HepG2 (cell line): ENCODE measurements at regions of chr13 and their contacts with region 1.

Region 1: GRCh38 chr13:51286135-51287002 is 53.1 kb upstream of the SERPINE3 start:
- DNase-seq: peak; percentile 39
- ATAC-seq: peak; percentile 92
- H3K4me3 ChIP-seq: no peak overlapping the region
- H3K27ac ChIP-seq: no peak overlapping the region
- H3K4me1 ChIP-seq: peaks cover 9% of the 10 kb centered on the region
- H3K27me3 ChIP-seq: peaks cover 0 to 19% of the 10 kb centered on the region in 2 experiments; a peak in 2 of 5 replicates
- CTCF ChIP-seq: peak; percentile 88
- EP300 ChIP-seq: no peak
- POLR2A ChIP-seq: no peak
- RAD21 ChIP-seq: peak; percentile 71

Region 2: DNA sequence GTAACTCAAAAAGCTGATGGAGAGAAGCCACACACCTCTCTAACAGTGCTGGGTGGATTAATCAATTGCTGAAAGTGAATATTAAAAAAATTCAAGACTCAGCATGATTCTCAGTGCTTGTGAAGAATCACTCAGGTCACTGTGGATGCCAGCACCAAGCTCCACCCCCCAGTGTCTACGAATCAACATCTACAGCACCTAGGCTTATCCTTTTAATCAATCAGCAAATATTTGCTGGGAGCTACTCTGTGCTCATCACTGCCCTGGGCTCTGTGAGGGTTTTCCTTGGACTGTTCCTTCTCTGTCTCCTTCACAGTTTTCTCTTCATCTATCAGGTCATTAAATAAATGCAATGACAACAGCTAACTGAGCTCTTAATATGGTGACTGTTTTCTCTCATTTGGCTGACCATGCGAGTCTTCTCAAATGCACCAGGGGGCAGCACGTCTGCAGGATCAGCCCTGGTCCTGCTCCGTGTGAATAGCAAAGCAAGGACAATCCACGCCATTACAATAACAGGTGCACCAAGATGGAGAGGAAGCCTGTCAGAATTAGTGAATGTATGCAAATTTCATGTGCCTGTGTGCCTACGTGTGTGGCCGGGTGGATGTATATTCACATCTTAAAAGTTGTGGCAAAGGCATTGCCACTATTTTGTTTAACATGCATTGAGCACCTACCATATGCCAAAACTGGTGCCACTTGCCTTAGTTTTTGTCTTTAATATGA is 160.7 kb before region 1 on chr13:
- CTCF ChIA-PET with region 1: interaction called, 23 read pairs
- POLR2A ChIA-PET with region 1: no interaction called
- in situ Hi-C with region 1: loop called (anchors 5 kb)
- intact Hi-C with region 1: loop called (anchors 1 kb)
- DNase-seq: peak; percentile 63
- ATAC-seq: peak; percentile 86
- H3K4me3 ChIP-seq: no peak overlapping the region
- H3K27ac ChIP-seq: no peak overlapping the region
- H3K4me1 ChIP-seq: peaks cover 29% of the 10 kb centered on the region
- H3K27me3 ChIP-seq: peaks cover 0 to 34% of the 10 kb centered on the region in 2 experiments; a peak in 4 of 5 replicates
- CTCF ChIP-seq: peak; percentile 86
- EP300 ChIP-seq: no peak
- POLR2A ChIP-seq: no peak
- RAD21 ChIP-seq: peak; percentile 55; the same call in 1 of the 2 replicates

Region 3: DNA sequence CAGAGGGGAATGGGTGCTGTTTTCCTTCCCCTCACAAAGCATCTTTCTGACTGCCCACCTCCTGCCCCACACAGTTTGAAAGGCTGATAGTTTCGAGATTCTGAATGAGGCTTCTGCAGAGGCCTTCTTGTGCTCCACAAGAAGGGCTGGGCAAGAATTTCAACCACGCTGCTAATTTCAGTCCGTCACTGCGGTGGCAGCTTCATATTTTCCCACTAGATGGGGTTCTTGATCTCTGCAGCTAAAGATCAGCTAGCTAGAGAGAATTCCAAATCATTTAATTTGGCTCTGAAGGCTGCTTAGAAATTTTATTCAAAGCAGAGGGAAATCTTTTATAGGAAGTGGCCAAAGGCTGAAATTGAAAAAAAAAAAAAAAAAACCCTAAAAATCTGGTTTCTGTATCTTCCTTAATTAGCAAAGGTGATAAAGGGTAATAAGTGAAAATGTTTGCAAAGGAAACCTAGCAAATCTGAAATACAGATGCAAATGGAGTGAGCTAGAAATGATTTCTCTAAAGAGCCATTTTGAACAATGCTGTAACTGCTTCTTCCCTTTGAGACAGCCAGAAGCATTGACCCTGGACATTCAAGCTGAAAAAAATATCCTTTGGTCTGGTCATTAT is 137.3 kb before region 1 on chr13:
- CTCF ChIA-PET with region 1: interaction called, 4 read pairs
- POLR2A ChIA-PET with region 1: no interaction called
- in situ Hi-C with region 1: loop called (anchors 10 kb)
- intact Hi-C with region 1: loop called (anchors 1 kb)
- DNase-seq: no peak
- ATAC-seq: peak; percentile 73
- H3K4me3 ChIP-seq: no peak overlapping the region
- H3K27ac ChIP-seq: no peak overlapping the region
- H3K4me1 ChIP-seq: no peaks in the 10 kb centered on the region
- H3K27me3 ChIP-seq: peaks cover 0 to 31% of the 10 kb centered on the region in 2 experiments; a peak in 4 of 5 replicates
- CTCF ChIP-seq: peak; percentile 56
- EP300 ChIP-seq: no peak
- POLR2A ChIP-seq: no peak
- RAD21 ChIP-seq: no peak

Region 4: DNA sequence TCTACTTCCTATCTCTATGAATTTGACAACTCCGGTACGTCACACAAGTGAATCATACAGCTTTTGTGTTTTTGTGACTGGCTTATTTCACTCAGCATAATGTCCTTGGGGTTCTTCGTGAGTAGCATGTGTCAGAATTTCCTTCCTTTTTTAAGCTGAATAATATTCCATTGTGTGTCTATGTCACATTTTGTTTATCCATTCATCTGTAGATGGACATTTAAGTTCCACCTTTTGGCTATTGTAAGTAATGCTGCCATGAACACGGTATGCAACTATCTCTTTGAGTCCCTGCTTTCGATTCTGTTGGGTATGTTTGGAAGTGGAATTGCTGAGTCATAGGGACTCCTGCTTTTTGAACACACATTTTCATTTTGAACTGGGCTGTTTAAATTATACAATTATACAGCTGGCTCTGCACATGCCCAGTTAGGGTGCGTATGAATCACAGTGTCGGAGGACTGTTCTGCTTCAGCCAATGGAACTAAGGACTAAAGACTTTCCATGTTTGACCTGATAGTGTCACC is 132.3 kb before region 1 on chr13:
- CTCF ChIA-PET with region 1: interaction called, 4 read pairs
- POLR2A ChIA-PET with region 1: no interaction called
- in situ Hi-C with region 1: loop called (anchors 10 kb)
- intact Hi-C with region 1: loop called (anchors 1 kb)
- DNase-seq: no peak
- ATAC-seq: no peak
- H3K4me3 ChIP-seq: no peak overlapping the region
- H3K27ac ChIP-seq: no peak overlapping the region
- H3K4me1 ChIP-seq: no peaks in the 10 kb centered on the region
- H3K27me3 ChIP-seq: 0 out of 5 replicates have a peak, but pooled peaks cover 0 to 15% of the 10 kb centered on the region in 2 experiments
- CTCF ChIP-seq: no peak
- EP300 ChIP-seq: no peak
- POLR2A ChIP-seq: no peak
- RAD21 ChIP-seq: no peak

Region 5: DNA sequence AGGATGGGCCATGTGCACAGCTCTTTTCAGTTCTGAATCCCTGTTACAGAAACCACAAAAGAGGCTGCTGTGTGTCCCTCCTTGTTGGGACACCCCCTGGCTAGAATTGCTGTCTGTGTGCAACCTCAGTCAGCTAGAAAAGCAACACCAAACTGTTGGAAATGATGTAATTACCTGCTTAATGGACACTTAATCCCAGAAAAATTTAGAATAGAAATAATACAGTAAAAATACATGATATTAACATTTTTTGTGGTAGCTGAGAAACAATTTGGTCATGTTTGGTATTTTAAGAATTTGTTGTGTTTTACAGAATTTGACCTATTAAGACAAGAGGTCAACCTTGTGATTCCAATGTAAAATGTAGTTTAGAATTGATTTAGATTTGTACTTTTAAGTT is 17.3 kb before region 1 on chr13:
- CTCF ChIA-PET with region 1: no interaction called
- POLR2A ChIA-PET with region 1: no interaction called
- in situ Hi-C with region 1: no loop called
- intact Hi-C with region 1: no loop called
- DNase-seq: no peak
- ATAC-seq: no peak
- H3K4me3 ChIP-seq: no peak overlapping the region
- H3K27ac ChIP-seq: no peak overlapping the region
- H3K4me1 ChIP-seq: no peaks in the 10 kb centered on the region
- H3K27me3 ChIP-seq: peaks cover 0 to 19% of the 10 kb centered on the region in 2 experiments; a peak in 3 of 5 replicates
- CTCF ChIP-seq: no peak
- EP300 ChIP-seq: no peak
- POLR2A ChIP-seq: no peak
- RAD21 ChIP-seq: no peak